Ovary (tissue), 10 donors: ENCODE measurements at regions of chr17 and their contacts with region 1.

Region 1: DNA sequence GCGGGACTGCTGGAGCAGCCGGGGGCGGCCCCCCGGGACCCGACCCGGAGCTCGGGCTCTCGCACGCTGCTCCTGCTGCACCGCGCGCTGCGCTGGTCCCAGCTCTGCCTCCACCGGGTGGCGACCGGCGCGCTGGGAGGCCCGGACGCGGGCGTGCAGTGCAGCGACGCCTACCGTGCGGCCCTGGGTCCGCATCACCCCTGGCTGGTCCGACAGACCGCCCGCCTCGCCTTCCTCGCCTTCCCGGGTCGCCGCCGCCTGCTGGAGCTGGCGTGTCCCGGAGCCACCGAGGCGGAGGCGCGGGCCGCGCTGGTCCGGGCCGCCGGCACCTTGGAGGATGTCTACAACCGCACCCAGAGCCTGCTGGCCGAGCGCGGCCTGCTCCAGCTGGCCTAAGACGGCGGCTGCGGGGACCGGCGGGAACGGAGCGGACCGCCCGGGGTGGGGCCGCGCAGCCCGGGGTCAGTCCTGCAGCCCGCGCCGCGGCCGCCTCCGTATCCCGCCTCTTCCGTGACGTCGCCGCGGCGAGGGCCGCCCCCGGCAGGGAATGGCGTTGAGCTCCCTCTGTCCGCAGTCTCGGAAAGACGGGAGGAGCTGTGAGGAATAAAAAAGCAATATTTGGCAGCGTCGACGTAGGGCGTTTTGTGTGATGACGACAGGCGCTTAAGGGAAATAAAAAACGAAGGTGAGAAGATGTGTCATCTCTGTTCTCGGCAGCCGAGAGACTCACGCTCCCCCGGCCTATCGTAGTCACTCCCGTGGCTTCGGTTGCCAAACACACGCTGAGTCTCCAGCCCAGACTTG is 1.3 kb downstream of the GLTPD2 start:
- DNase-seq: peak; percentile 75 to 86 (median 86)
- H3K4me3 ChIP-seq: peak overlapping the region; percentile 74
- H3K27ac ChIP-seq: peak overlapping the region; percentile 86 to 89
- H3K4me1 ChIP-seq: peaks cover 13% of the 10 kb centered on the region
- H3K27me3 ChIP-seq: no peaks in the 10 kb centered on the region
- CTCF ChIP-seq: peak; percentile 58 to 98 (median 97)
- EP300 ChIP-seq: peak; percentile 46
- POLR2A ChIP-seq: peak; percentile 81

Region 2: DNA sequence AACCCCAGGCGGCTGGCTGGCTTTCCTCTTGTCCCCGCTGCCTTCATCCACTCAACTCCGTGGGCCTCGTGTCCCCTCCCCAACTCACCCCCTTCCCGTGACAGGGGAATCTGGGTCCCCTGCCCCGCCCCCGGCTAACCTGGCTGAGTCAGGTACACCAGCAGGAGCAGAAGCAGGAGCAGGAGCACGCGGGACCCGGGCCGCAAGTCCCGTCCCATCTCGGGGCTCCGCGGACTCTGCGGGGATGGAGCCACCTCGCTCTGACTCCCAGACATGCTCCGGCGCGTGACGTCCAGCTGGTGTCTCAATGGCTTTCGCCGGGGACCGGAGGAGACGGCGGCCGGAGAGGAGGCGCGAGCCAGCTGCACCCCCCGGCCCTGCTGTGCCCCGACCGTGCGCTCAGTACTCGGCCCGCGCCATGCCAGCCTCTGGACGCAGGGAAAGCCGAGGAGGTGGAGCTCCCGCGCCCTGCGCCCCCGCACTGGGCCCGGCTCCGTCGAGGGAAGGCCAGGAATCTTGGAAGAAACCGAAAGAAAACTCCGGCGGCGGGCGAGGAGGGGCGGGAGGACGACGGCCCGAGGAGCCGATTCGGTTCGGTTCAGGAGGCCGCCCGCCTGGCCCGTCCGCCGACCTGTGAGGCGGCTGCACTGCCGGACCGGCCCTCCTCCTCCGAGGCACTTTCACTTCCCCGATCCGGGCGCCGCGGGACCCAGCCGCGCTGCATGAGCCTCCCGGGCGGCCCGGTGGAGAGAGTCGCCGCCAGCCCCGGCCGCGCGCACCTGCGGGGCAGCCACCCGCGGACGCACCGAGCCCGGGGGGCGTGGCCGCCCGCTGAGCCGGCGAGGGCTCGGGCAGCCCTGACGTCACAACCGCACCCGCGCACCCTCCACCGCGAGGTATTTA is 50.7 kb before region 1 on chr17 and contains the starts of genes CXCL16 and ZMYND15:
- intact Hi-C with region 1: loop called in 1 of 4 experiments (anchors 10 kb)
- DNase-seq: peak; percentile 42 to 74 (median 57)
- H3K4me3 ChIP-seq: peak within 1 kb of the TSS; percentile 51
- H3K27ac ChIP-seq: peak within 1 kb of the TSS in 1 of 2 donors; percentile 46
- H3K4me1 ChIP-seq: peaks cover 5% of the 10 kb centered on the region
- H3K27me3 ChIP-seq: no peaks in the 10 kb centered on the region
- CTCF ChIP-seq: no peak
- EP300 ChIP-seq: no peak
- POLR2A ChIP-seq: no peak
- total RNA-seq, gene CXCL16: 5.8 to 30.7 (median 16.8) TPM
- total RNA-seq, gene ZMYND15: 0.36 to 1.4 (median 0.99) TPM

Region 3: GRCh38 chr17:4881761-4882555 is 91.9 kb after region 1 on chr17:
- intact Hi-C with region 1: loop called in 2 of 4 experiments (anchors 2 to 5 kb)
- DNase-seq: peak; percentile 63 to 75 (median 67)
- H3K4me3 ChIP-seq: no peak overlapping the region
- H3K27ac ChIP-seq: peak overlapping the region in 1 of 2 donors; percentile 24
- H3K4me1 ChIP-seq: peaks cover 3% of the 10 kb centered on the region
- H3K27me3 ChIP-seq: no peaks in the 10 kb centered on the region
- CTCF ChIP-seq: peak; percentile 63 to 66 (median 66)
- EP300 ChIP-seq: no peak
- POLR2A ChIP-seq: no peak

Region 4: GRCh38 chr17:4891411-4892342 is 101.6 kb after region 1 on chr17:
- intact Hi-C with region 1: loop called in 3 of 4 experiments (anchors 2 to 5 kb)
- DNase-seq: peak in 1 of 5 donors; percentile 34
- H3K4me3 ChIP-seq: no peak overlapping the region
- H3K27ac ChIP-seq: no peak overlapping the region
- H3K4me1 ChIP-seq: no peaks in the 10 kb centered on the region
- H3K27me3 ChIP-seq: no peaks in the 10 kb centered on the region
- CTCF ChIP-seq: no peak
- EP300 ChIP-seq: no peak
- POLR2A ChIP-seq: no peak

Region 5: GRCh38 chr17:4903051-4903818 is 113.1 kb after region 1 on chr17 and contains the start of gene CHRNE:
- intact Hi-C with region 1: loop called in 1 of 4 experiments (anchors 5 kb)
- DNase-seq: peak; percentile 66 to 89 (median 78)
- H3K4me3 ChIP-seq: no peak within 1 kb of the TSS
- H3K27ac ChIP-seq: peak within 1 kb of the TSS; percentile 27 to 61
- H3K4me1 ChIP-seq: peaks cover 11% of the 10 kb centered on the region
- H3K27me3 ChIP-seq: no peaks in the 10 kb centered on the region
- CTCF ChIP-seq: peak; percentile 52 to 82 (median 82)
- EP300 ChIP-seq: no peak
- POLR2A ChIP-seq: no peak
- total RNA-seq, gene CHRNE: 0.34 to 1.4 (median 1.0) TPM

Region 6: DNA sequence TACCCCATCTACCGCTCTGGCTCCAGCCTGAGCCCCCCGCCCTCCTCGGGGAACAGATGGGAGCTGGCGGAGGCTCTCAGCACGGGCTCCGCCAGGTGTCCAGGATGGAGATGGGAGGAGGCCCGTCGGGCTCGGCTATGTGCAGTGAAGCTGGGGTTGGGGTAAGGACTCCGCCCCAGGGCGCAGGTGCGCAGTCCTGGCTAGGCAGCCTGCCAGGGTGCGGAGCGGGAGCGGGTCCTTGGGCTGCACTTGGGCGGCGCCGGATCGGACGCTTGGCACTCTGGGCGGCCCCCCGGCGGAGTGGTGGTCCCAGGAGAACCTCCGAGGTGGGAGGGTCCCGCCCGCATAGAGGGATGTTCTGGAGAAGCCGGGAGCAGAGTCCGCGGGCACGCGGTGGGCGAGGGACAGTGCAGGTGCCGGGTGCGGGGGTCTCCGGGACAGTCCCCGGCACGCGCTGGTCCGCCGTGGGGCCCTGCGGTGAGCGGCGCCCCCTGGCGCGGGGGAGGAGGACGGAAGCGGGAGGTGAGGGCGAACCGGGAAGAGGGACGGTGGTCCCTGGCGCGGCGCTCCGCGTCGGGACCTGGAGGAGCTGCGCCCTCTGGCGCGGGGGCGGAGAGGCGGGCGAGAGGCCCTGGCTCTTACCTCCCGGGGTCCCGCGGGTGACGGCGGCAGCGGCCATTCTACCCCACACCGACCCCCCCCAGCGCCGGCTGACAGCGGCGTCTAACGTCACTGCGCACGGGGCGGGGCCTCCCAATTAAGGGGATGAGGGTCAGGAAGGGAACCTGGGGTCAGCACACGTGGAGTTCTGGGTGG is 197.1 kb after region 1 on chr17 and contains the start of gene CAMTA2:
- intact Hi-C with region 1: no loop called
- DNase-seq: peak; percentile 90 to 93 (median 92)
- H3K4me3 ChIP-seq: peak within 1 kb of the TSS; percentile 51
- H3K27ac ChIP-seq: peak within 1 kb of the TSS; percentile 95 to 97
- H3K4me1 ChIP-seq: peaks cover 11% of the 10 kb centered on the region
- H3K27me3 ChIP-seq: no peaks in the 10 kb centered on the region
- CTCF ChIP-seq: peak; percentile 50 to 83 (median 79)
- EP300 ChIP-seq: no peak
- POLR2A ChIP-seq: peak; percentile 72
- total RNA-seq, gene CAMTA2: 10.2 to 71.2 (median 35.7) TPM

Region 7: DNA sequence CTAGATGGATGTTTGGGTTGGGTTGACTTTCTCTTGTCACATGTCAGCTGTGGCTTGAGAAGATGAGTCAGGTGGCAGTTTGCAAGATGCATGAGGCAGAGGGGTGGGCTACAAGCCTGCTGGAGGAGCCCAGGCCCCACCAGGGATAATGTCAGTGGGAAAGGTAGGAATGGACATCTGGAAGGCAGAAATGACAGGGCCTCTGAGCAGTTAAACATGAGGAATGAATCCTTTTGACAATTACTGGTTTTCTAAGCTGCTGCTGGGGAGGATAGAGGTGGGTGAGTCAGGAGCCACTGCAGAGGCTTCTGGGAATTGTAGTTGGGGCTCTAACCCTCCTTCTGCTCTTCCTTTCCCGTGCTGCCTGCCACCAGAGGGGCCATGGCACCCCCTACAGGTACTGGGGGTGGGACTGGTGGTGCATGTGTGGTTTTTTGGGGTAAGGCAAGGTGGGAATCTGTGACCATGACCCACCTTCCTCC is 229.4 kb after region 1 on chr17:
- intact Hi-C with region 1: no loop called
- DNase-seq: no peak
- H3K4me3 ChIP-seq: no peak overlapping the region
- H3K27ac ChIP-seq: no peak overlapping the region
- H3K4me1 ChIP-seq: no peaks in the 10 kb centered on the region
- H3K27me3 ChIP-seq: no peaks in the 10 kb centered on the region
- CTCF ChIP-seq: no peak
- EP300 ChIP-seq: no peak
- POLR2A ChIP-seq: no peak

Region 8: DNA sequence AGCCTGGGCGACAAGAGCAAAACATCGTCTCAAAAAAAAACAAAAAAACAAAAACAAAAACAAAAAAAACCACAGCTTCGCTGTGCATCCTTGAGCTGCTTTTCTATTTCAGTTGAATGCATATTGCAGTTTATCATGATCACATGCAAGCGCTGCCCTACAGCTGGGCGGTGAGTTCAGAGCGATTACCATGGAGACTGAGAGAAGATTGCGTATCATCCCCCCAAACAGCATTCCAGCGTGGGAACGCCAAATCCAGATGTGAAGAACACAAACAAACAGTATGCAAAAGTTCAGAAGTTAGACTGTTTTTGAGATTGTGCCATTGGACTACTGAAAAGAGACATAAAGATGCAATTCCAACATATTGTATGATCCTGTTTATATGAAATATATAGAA is 260.2 kb after region 1 on chr17:
- intact Hi-C with region 1: loop called in 1 of 4 experiments (anchors 10 kb)
- DNase-seq: no peak
- H3K4me3 ChIP-seq: no peak overlapping the region
- H3K27ac ChIP-seq: no peak overlapping the region
- H3K4me1 ChIP-seq: peaks cover 6% of the 10 kb centered on the region
- H3K27me3 ChIP-seq: no peaks in the 10 kb centered on the region
- CTCF ChIP-seq: no peak
- EP300 ChIP-seq: no peak
- POLR2A ChIP-seq: no peak